MCF 10A (cell line): ENCODE measurements at regions of chr3 and their contacts with region 1.

Region 1: GRCh38 chr3:56801662-56802377 is at the start of gene ARHGEF3:
- DNase-seq: peak; percentile 85
- H3K4me3 Mint-ChIP-seq: peak within 1 kb of the TSS; percentile 78
- H3K27ac Mint-ChIP-seq: peak within 1 kb of the TSS; percentile 0
- H3K4me1 Mint-ChIP-seq: peaks cover 24% of the 10 kb centered on the region
- H3K27me3 Mint-ChIP-seq: no peaks in the 10 kb centered on the region
- CTCF ChIP-seq: peak; percentile 47
- total RNA-seq, gene ARHGEF3: 10.6 and 13.1 TPM in 2 replicates

Region 2: DNA sequence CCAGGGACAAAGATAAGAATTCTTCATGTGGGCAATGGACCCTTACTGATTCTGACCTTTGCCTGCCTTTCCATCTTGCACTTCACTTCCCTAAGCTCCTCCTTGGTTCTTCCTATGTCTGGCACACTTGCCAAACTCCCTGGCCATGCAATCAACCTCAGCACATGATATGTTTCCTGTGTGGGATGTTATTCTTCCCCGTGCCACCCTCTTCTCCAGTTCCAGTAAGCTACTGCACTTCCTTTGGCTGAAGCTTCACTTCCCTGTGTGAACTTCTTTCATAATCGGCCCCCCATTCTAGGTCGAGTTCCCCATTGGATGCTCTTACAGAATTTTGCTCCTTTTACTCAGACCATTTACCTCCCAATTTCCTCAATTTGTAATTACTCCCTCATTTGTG is 108.1 kb before region 1 on chr3:
- CTCF ChIA-PET with region 1: interaction called, 17 read pairs
- POLR2A ChIA-PET with region 1: interaction called, 4 read pairs
- intact Hi-C with region 1: no loop called
- DNase-seq: peak; percentile 17
- H3K4me3 Mint-ChIP-seq: no peak overlapping the region
- H3K27ac Mint-ChIP-seq: peak overlapping the region; percentile 35
- H3K4me1 Mint-ChIP-seq: peaks cover 19% of the 10 kb centered on the region
- H3K27me3 Mint-ChIP-seq: no peaks in the 10 kb centered on the region
- CTCF ChIP-seq: no peak

Region 3: GRCh38 chr3:56737006-56737405 is 64.8 kb before region 1 on chr3:
- CTCF ChIA-PET with region 1: interaction called, 13 read pairs
- POLR2A ChIA-PET with region 1: no interaction called
- intact Hi-C with region 1: no loop called
- DNase-seq: no peak
- H3K4me3 Mint-ChIP-seq: no peak overlapping the region
- H3K27ac Mint-ChIP-seq: no peak overlapping the region
- H3K4me1 Mint-ChIP-seq: no peaks in the 10 kb centered on the region
- H3K27me3 Mint-ChIP-seq: no peaks in the 10 kb centered on the region
- CTCF ChIP-seq: no peak

Region 4: GRCh38 chr3:56783644-56784447 is 18.0 kb before region 1 on chr3:
- CTCF ChIA-PET with region 1: interaction called, 63 read pairs
- POLR2A ChIA-PET with region 1: interaction called, 32 read pairs
- intact Hi-C with region 1: no loop called
- DNase-seq: peak; percentile 92
- H3K4me3 Mint-ChIP-seq: peak overlapping the region; percentile 43
- H3K27ac Mint-ChIP-seq: peak overlapping the region; percentile 92
- H3K4me1 Mint-ChIP-seq: peaks cover 40% of the 10 kb centered on the region
- H3K27me3 Mint-ChIP-seq: no peaks in the 10 kb centered on the region
- CTCF ChIP-seq: no peak

Region 5: DNA sequence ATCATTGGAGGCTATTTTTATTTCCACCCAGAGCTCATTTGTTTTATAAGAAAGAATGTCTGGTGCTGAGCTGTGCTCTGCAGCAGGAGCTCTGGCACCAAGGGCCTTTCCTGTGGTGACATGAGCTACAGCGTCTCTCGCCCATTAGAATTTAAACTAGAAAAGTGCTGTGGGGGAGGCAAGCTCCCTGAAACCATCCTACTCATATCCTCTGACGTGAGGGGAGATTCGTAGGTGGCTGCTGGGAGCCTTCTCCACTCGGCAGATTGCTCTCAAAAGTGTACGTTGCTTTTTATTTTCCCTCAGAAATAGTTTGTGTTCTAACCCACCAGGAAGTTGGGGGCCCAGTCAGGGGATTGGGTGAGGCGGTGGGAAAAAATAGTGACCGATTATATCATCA is 76.3 kb after region 1 on chr3:
- CTCF ChIA-PET with region 1: no interaction called
- POLR2A ChIA-PET with region 1: no interaction called
- intact Hi-C with region 1: no loop called
- DNase-seq: no peak
- H3K4me3 Mint-ChIP-seq: no peak overlapping the region
- H3K27ac Mint-ChIP-seq: no peak overlapping the region
- H3K4me1 Mint-ChIP-seq: peaks cover 9% of the 10 kb centered on the region
- H3K27me3 Mint-ChIP-seq: no peaks in the 10 kb centered on the region
- CTCF ChIP-seq: no peak

Region 6: GRCh38 chr3:56980798-56981390 is 179.1 kb after region 1 on chr3:
- CTCF ChIA-PET with region 1: interaction called, 170 read pairs
- POLR2A ChIA-PET with region 1: interaction called, 7 read pairs
- intact Hi-C with region 1: no loop called
- DNase-seq: peak; percentile 97
- H3K4me3 Mint-ChIP-seq: no peak overlapping the region
- H3K27ac Mint-ChIP-seq: peak overlapping the region; percentile 12
- H3K4me1 Mint-ChIP-seq: peaks cover 14% of the 10 kb centered on the region
- H3K27me3 Mint-ChIP-seq: no peaks in the 10 kb centered on the region
- CTCF ChIP-seq: no peak